Dorsolateral prefrontal cortex (tissue), 120 donors: ENCODE measurements at regions of chr2 and their contacts with region 1.

Region 1: GRCh38 chr2:99337113-99338028 is at the start of gene EIF5B:
- DNase-seq: peak; percentile 95 to 98 (median 96)
- H3K4me3 ChIP-seq: peak within 1 kb of the TSS; percentile 65 to 100 (median 93)
- H3K27ac ChIP-seq: peak within 1 kb of the TSS; percentile 65 to 97 (median 93)
- H3K27me3 ChIP-seq: no peaks in the 10 kb centered on the region
- CTCF ChIP-seq: peak; percentile 69 to 93 (median 83)
- total RNA-seq, gene EIF5B: 23.5 to 41.3 (median 31.9) TPM

Region 2: GRCh38 chr2:98608116-98608999 is 729.0 kb before region 1 on chr2 and contains the starts of genes COA5 and UNC50:
- intact Hi-C with region 1: loop called in 1 of 2 experiments (anchors 2 kb)
- DNase-seq: peak; percentile 64 to 92 (median 82)
- H3K4me3 ChIP-seq: peak within 1 kb of the TSS; percentile 60 to 100 (median 98)
- H3K27ac ChIP-seq: peak within 1 kb of the TSS; percentile 70 to 98 (median 93)
- H3K27me3 ChIP-seq: no peaks in the 10 kb centered on the region
- CTCF ChIP-seq: peak in 47 of 56 donors; percentile 3 to 67 (median 37)
- total RNA-seq, gene COA5: 41.4 to 68.3 (median 56.3) TPM
- total RNA-seq, gene UNC50: 30.2 to 65.7 (median 43.9) TPM

Region 3: GRCh38 chr2:99141110-99142108 is 196.0 kb before region 1 on chr2 and contains the start of gene C2orf15:
- intact Hi-C with region 1: loop called in 1 of 2 experiments (anchors 2 kb)
- DNase-seq: peak; percentile 83 to 98 (median 94)
- H3K4me3 ChIP-seq: peak within 1 kb of the TSS; percentile 63 to 100 (median 89)
- H3K27ac ChIP-seq: peak within 1 kb of the TSS; percentile 26 to 98 (median 93)
- H3K27me3 ChIP-seq: no peaks in the 10 kb centered on the region
- CTCF ChIP-seq: peak in 8 of 56 donors; percentile 11 to 33 (median 22)
- total RNA-seq, gene C2orf15: 0.81 to 5.3 (median 2.5) TPM

Region 4: GRCh38 chr2:99180755-99181623 is 156.4 kb before region 1 on chr2 and contains the starts of genes MITD1 and MRPL30:
- intact Hi-C with region 1: loop called (anchors 1 kb)
- DNase-seq: peak; percentile 91 to 96 (median 94)
- H3K4me3 ChIP-seq: peak within 1 kb of the TSS; percentile 54 to 99 (median 88)
- H3K27ac ChIP-seq: peak within 1 kb of the TSS in 58 of 59 donors; percentile 17 to 92 (median 81)
- H3K27me3 ChIP-seq: no peaks in the 10 kb centered on the region
- CTCF ChIP-seq: peak in 42 of 56 donors; percentile 3 to 60 (median 39)
- total RNA-seq, gene MITD1: 7.5 to 42.1 (median 22.0) TPM
- total RNA-seq, gene MRPL30: 18.6 to 44.3 (median 31.2) TPM

Region 5: DNA sequence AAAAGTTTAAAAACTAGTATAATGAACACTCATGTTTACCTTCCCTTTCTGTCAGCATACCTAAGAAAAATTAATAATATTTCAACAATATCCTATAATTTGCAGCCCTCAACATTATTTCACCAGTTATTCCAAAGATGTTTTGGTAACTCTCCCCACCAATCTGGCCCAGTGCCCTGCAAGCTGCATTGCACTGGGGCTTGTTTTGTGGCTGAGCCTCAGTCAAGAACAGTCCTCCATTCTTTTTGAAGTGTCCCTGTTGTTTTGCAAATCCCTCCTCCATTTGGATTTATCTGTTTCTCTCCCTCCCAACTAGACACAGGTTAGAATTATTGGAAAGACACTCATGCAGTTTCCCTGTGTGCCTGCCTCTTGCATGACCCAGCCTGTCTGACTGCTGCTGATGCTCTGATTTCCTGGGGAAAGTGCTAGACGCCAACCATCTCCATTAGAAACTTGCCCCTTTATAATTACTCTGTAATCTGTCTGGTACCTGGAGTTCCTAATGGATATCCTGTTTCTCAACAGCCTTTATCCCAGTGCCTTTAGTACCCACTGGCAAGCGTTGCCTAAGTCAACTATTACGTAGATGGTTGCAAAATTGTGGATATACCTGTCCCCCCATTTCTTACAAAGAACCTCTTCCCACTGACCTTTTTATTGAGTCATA is 60.0 kb after region 1 on chr2:
- intact Hi-C with region 1: loop called in 1 of 2 experiments (anchors 2 kb)
- DNase-seq: peak in 6 of 10 donors; percentile 21 to 58 (median 34)
- H3K4me3 ChIP-seq: peak overlapping the region in 1 of 59 donors; percentile 3
- H3K27ac ChIP-seq: peak overlapping the region; percentile 31 to 93 (median 79)
- H3K27me3 ChIP-seq: no peaks in the 10 kb centered on the region
- CTCF ChIP-seq: no peak

Region 6: DNA sequence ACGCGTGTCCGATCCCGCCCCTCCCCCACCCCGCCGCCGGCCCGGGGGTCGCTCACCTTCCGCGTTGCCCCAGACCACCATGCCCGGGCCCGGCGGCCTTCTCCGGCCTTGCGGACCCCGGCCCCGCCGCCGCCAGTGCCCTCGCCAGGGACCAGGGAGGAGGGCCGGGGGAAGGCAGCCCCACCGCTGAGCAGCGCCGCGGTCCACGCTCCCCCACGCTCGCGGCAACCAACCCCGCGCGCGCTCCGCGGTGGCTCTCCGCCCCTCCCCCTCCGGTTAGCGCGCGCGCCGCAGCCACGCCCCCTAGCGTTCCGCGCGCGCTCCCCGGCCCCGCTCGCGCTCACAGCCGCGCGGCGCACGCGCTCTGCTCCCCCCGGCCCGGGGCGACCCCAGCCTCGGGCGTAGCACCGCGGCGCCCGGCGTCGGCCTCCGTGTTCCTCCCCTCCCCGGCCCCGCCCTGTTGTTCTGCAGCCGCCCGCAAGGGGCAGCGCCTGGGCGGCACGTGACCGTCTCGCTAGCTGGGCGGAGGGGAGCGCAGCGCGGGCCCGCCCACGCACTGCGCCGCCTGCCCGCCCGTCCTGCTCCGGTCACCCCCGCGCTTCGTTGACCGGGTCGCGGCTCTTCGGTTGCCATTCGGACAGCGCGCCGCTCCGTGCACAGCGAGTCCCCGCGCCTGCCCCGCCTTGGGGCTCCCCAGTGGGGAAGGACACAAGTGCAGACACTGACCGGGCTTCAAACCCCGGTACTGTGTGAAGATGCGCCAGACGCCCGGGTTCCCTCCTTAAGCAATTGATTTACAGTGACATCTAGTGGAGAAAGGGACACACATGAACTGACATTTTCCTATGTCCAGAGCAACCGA is 152.6 kb after region 1 on chr2 and contains the start of gene REV1:
- intact Hi-C with region 1: loop called (anchors 1 kb)
- DNase-seq: peak; percentile 78 to 93 (median 90)
- H3K4me3 ChIP-seq: peak within 1 kb of the TSS; percentile 61 to 96 (median 86)
- H3K27ac ChIP-seq: peak within 1 kb of the TSS; percentile 86 to 100 (median 96)
- H3K27me3 ChIP-seq: no peaks in the 10 kb centered on the region
- CTCF ChIP-seq: peak; percentile 59 to 94 (median 82)
- total RNA-seq, gene REV1: 47.8 to 91.4 (median 67.5) TPM